OCI-LY7 (cell line): ENCODE measurements at regions of chr7 and their contacts with region 1.

Region 1: DNA sequence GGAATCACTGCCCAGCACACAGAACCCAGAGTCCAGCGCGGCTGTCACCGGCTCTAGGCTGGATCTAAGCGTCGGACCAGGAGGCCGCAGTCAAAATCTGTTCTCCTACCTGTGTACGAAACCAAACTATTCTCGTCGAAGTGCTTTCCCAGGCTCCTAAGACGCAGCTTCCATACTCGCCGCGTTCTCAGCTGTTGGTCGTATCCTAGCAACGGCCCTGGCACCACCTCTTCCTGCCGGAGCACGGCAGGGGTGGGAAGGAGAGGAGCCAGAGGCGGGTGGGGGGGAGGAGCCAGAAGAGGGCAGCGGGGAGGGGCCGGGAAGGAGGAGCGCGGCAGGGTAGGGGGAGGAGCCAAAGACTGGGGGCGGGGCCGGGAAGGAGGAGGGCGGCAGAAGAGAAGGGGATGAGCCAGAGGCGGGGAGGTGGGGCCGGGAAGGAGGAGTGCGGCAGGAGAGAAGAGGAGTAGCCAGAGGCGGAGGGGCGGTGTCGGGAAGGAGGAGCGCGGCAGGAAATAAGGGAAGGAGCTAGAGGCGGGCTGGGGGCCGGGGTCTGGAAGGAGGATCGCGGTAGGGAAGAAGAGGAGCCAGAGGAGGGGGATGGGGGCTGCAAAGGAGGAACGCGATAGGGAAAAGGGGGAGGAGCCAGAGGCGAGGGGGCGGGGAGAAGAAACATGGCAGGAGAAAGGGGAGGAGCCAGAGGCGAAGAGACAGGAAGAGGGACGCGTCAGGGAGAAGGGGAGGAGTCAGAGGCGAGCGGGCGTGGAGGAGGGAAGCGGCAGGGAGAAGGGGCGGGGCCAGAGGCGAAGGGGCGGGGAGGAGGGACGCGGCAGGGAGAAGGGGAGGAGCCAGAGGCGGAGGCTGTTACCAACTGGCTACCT is at the start of gene IQUB:
- DNase-seq: peak; percentile 95
- H3K4me3 ChIP-seq: peak within 1 kb of the TSS; percentile 70
- H3K27ac ChIP-seq: peak within 1 kb of the TSS; percentile 48
- H3K4me1 ChIP-seq: no peaks in the 10 kb centered on the region
- CTCF ChIP-seq: no peak
- total RNA-seq, gene IQUB: 0.09 and 0.15 TPM in 2 replicates

Region 2: GRCh38 chr7:123494193-123494796 is 40.3 kb before region 1 on chr7:
- CTCF ChIA-PET with region 1: interaction called, 12 read pairs
- POLR2A ChIA-PET with region 1: interaction called, 5 read pairs
- intact Hi-C with region 1: loop called (anchors 2 kb)
- DNase-seq: peak; percentile 50
- H3K4me3 ChIP-seq: no peak overlapping the region
- H3K27ac ChIP-seq: no peak overlapping the region
- H3K4me1 ChIP-seq: no peaks in the 10 kb centered on the region
- CTCF ChIP-seq: peak; percentile 92

Region 3: DNA sequence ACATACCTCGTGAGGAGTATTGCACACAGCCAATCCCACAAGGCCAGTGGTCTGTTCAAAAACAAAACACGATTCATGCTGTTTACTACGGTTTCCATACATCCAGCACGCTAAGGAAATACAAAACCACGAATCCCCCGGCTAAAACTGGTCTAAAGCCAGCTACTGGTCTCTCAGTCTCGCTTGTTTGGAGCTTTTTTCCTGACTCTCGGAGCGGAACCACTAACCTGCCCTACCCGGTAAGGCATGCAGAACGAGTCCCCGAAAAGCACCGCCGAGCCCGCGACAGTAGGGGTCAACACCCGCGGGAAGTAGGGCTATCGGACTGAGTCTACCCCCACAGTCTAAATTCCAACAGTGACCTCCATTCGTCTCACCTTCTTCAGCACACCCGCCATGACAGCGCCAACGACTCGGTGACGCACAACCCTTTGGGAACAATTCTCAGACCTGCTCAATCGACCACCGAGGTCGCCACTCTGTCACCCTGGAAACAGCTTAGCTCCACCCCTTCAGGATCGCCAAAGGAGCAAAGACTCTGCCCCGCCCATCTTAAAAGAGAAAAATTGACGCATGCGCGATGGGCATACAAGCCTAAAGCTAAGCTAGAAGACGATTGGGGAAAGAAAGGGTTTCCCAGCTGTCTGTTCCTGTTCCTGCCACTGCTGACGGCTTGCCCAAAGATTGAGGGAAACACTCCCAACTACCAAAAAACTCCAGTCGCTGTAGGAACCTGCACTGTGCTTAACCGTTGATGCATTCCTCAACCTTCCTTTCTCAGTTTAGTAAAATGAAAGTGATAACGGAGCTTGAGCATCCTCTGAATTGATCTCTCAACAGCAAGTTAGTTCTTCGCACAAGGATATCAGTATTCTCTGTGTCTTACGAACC is 23.0 kb after region 1 on chr7 and contains the start of gene NDUFA5:
- CTCF ChIA-PET with region 1: no interaction called
- POLR2A ChIA-PET with region 1: interaction called, 15 read pairs
- intact Hi-C with region 1: loop called (anchors 1 kb)
- DNase-seq: peak; percentile 99
- H3K4me3 ChIP-seq: peak within 1 kb of the TSS; percentile 92
- H3K27ac ChIP-seq: peak within 1 kb of the TSS; percentile 49
- H3K4me1 ChIP-seq: peaks cover 15% of the 10 kb centered on the region
- CTCF ChIP-seq: no peak
- total RNA-seq, gene NDUFA5: 42.6 and 50.8 TPM in 2 replicates